HCT116 (cell line): ENCODE measurements at regions of chr15 and their contacts with region 1.

Region 1: DNA sequence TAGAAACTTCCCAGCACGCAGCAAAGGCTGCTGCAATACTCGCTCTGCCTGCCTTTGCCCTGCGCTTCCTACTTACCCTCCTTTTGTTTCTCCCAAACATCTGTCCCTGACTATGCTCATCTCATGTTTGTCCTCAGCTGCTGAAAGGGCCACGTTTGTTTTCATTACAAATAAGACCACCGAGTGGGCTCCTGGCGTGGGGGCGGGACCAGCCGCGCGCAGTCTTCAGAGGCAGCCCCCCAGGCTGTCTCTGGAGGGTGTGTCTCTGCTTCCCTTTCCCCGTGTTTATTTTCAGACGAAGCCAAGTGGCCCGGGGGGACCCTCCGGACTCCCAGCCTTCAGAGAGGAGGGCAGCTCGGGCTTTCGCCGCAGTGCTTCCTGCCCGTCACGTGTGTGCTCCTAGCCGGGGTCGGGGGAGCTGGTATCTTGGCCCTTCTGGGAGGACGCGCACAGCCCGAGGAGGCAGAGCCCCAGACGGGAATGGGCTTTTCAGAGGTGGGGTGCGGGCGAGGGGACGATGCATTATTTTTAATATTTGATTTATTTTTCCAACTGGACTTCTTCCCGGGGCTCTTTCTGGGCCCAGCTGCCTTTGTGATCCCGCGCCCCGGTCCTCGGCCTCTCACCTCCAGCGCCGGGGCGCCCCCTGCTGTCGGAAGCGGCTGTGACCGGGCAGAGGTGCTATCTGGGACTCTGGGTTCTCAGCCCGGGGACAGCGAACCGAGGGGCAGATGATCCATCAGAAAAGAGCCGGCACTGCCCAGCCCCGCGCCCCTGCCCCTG is 70.0 kb upstream of the CGNL1 start:
- DNase-seq: peak; percentile 13
- ATAC-seq: peak; percentile 94
- H3K4me3 ChIP-seq: no peak overlapping the region
- H3K27ac ChIP-seq: no peak overlapping the region
- H3K4me1 ChIP-seq: no peaks in the 10 kb centered on the region
- H3K27me3 ChIP-seq: no peaks in the 10 kb centered on the region
- CTCF ChIP-seq: peak; percentile 57 to 87 (median 84); a peak in 5 of 6 replicates
- POLR2A ChIP-seq: no peak
- RAD21 ChIP-seq: peak; percentile 84

Region 2: GRCh38 chr15:56491110-56491722 is 815.1 kb before region 1 on chr15:
- CTCF ChIA-PET with region 1: interaction called, 11 read pairs
- POLR2A ChIA-PET with region 1: no interaction called
- RAD21 ChIA-PET with region 1: no interaction called
- intact Hi-C with region 1: loop called (anchors 1 kb)
- DNase-seq: peak; percentile 71
- ATAC-seq: peak; percentile 90
- H3K4me3 ChIP-seq: no peak overlapping the region
- H3K27ac ChIP-seq: no peak overlapping the region
- H3K4me1 ChIP-seq: peaks cover 0 to 4% of the 10 kb centered on the region in 2 experiments; a peak in 3 of 4 replicates
- H3K27me3 ChIP-seq: no peaks in the 10 kb centered on the region
- CTCF ChIP-seq: peak; percentile 51 to 94 (median 92); a peak in 5 of 6 replicates
- POLR2A ChIP-seq: no peak
- RAD21 ChIP-seq: peak; percentile 80

Region 3: GRCh38 chr15:56821721-56822425 is 484.5 kb before region 1 on chr15:
- CTCF ChIA-PET with region 1: interaction called, 12 read pairs
- POLR2A ChIA-PET with region 1: no interaction called
- RAD21 ChIA-PET with region 1: no interaction called
- intact Hi-C with region 1: loop called (anchors 1 kb)
- DNase-seq: peak; percentile 48
- ATAC-seq: peak; percentile 91
- H3K4me3 ChIP-seq: no peak overlapping the region
- H3K27ac ChIP-seq: no peak overlapping the region
- H3K4me1 ChIP-seq: peaks cover 18 to 28% of the 10 kb centered on the region in 2 experiments
- H3K27me3 ChIP-seq: no peaks in the 10 kb centered on the region
- CTCF ChIP-seq: peak; percentile 56 to 73 (median 73); a peak in 5 of 6 replicates
- POLR2A ChIP-seq: no peak
- RAD21 ChIP-seq: peak; percentile 85

Region 4: DNA sequence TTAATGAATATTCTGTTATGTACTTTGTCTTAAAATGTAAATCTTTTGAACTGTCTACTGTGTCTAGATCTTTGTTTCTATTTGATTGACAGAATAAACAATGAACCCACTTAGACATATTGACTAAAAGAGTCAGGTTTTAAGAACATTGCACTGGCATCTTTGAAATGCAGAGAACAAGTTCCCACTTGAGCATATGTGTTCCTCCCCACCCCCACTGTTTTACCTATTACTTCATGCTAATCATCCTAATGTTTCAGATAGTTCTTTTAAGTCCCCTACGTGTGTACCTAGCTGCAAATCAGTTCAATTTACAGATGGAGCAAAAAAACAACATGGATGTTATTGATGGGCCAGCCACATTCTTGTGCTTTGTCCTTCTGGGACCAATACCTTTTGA is 399.6 kb before region 1 on chr15:
- CTCF ChIA-PET with region 1: no interaction called
- POLR2A ChIA-PET with region 1: no interaction called
- RAD21 ChIA-PET with region 1: no interaction called
- intact Hi-C with region 1: loop called (anchors 10 kb)
- DNase-seq: no peak
- ATAC-seq: no peak
- H3K4me3 ChIP-seq: no peak overlapping the region
- H3K27ac ChIP-seq: no peak overlapping the region
- H3K4me1 ChIP-seq: no peaks in the 10 kb centered on the region
- H3K27me3 ChIP-seq: no peaks in the 10 kb centered on the region
- CTCF ChIP-seq: no peak
- POLR2A ChIP-seq: no peak
- RAD21 ChIP-seq: no peak

Region 5: GRCh38 chr15:57017024-57017423 is 289.3 kb before region 1 on chr15:
- CTCF ChIA-PET with region 1: no interaction called
- POLR2A ChIA-PET with region 1: no interaction called
- RAD21 ChIA-PET with region 1: no interaction called
- intact Hi-C with region 1: loop called (anchors 5 kb)
- DNase-seq: no peak
- ATAC-seq: peak; percentile 38
- H3K4me3 ChIP-seq: no peak overlapping the region
- H3K27ac ChIP-seq: no peak overlapping the region
- H3K4me1 ChIP-seq: peaks cover 3 to 27% of the 10 kb centered on the region in 2 experiments; a peak in 3 of 4 replicates
- H3K27me3 ChIP-seq: no peaks in the 10 kb centered on the region
- CTCF ChIP-seq: peak in 2 of 3 experiments; percentile 16 to 30; a peak in 1 of 6 replicates
- POLR2A ChIP-seq: no peak
- RAD21 ChIP-seq: peak; percentile 24; the same call in 1 of the 2 replicates

Region 6: GRCh38 chr15:57146506-57147201 is 159.7 kb before region 1 on chr15:
- CTCF ChIA-PET with region 1: interaction called, 30 read pairs
- POLR2A ChIA-PET with region 1: no interaction called
- RAD21 ChIA-PET with region 1: interaction called in 1 of 2 experiments, 3 read pairs
- intact Hi-C with region 1: loop called (anchors 1 kb)
- DNase-seq: peak; percentile 8
- ATAC-seq: no peak
- H3K4me3 ChIP-seq: no peak overlapping the region
- H3K27ac ChIP-seq: no peak overlapping the region
- H3K4me1 ChIP-seq: no peaks in the 10 kb centered on the region
- H3K27me3 ChIP-seq: no peaks in the 10 kb centered on the region
- CTCF ChIP-seq: peak; percentile 44 to 67 (median 48); a peak in 5 of 6 replicates
- POLR2A ChIP-seq: no peak
- RAD21 ChIP-seq: peak; percentile 62

Region 7: DNA sequence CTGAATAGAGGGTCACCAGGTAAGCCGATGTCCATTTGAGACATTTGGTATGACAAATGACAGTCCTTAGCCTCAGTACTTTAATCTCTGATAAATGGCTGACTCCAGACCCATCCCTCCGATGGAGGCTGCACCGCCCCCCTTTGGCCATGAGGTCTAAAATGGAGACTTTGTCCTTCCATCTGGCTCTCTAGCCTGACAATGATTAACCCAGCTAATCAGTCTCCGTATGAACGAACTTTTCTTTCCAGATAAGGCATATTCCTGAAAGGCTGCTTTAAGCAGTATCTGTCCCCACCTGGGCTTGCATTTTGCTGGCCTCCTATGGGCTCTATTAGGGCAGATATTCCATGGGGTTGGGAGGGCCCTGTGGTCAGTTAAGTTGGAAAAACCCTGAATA is 274.5 kb after region 1 on chr15:
- CTCF ChIA-PET with region 1: no interaction called
- POLR2A ChIA-PET with region 1: no interaction called
- RAD21 ChIA-PET with region 1: no interaction called
- intact Hi-C with region 1: no loop called
- DNase-seq: no peak
- ATAC-seq: no peak
- H3K4me3 ChIP-seq: no peak overlapping the region
- H3K27ac ChIP-seq: no peak overlapping the region
- H3K4me1 ChIP-seq: no peaks in the 10 kb centered on the region
- H3K27me3 ChIP-seq: no peaks in the 10 kb centered on the region
- CTCF ChIP-seq: no peak
- POLR2A ChIP-seq: no peak
- RAD21 ChIP-seq: no peak